H1 (cell line): ENCODE measurements at regions of chr11 and their contacts with region 1.

Region 1: GRCh38 chr11:130904380-130904779 is 11.9 kb downstream of the SNX19 start:
- DNase-seq: no peak
- H3K4me3 ChIP-seq: no peak overlapping the region
- H3K27ac ChIP-seq: no peak overlapping the region
- H3K4me1 ChIP-seq: no peaks in the 10 kb centered on the region
- H3K27me3 ChIP-seq: no peaks in the 10 kb centered on the region
- CTCF ChIP-seq: peak in 2 of 3 experiments; percentile 24 to 45; a peak in 2 of 4 replicates
- EP300 ChIP-seq: no peak
- POLR2A ChIP-seq: no peak
- RAD21 ChIP-seq: peak in 1 of 2 experiments; percentile 27; a peak in 2 of 4 replicates

Region 2: GRCh38 chr11:130787092-130787616 is 117.2 kb before region 1 on chr11:
- CTCF ChIA-PET with region 1: no interaction called
- POLR2A ChIA-PET with region 1: no interaction called
- DNase-seq: no peak
- H3K4me3 ChIP-seq: no peak overlapping the region
- H3K27ac ChIP-seq: no peak overlapping the region
- H3K4me1 ChIP-seq: peaks cover 0 to 7% (median 2%) of the 10 kb centered on the region in 4 experiments; a peak in 3 of 7 replicates
- H3K27me3 ChIP-seq: no peaks in the 10 kb centered on the region
- CTCF ChIP-seq: no peak
- EP300 ChIP-seq: no peak
- POLR2A ChIP-seq: no peak
- RAD21 ChIP-seq: no peak

Region 3: GRCh38 chr11:130916238-130916855 is 12.0 kb after region 1 on chr11 and contains the start of gene SNX19:
- CTCF ChIA-PET with region 1: interaction called, 33 read pairs
- POLR2A ChIA-PET with region 1: interaction called, 3 read pairs
- DNase-seq: peak; percentile 61 to 96
- H3K4me3 ChIP-seq: peak within 1 kb of the TSS; percentile 69 to 87 (median 76)
- H3K27ac ChIP-seq: 0 out of 2 replicates have a peak within 1 kb of the TSS, but pooled peaks have one; percentile 7
- H3K4me1 ChIP-seq: peaks cover 0 to 7% (median 3%) of the 10 kb centered on the region in 4 experiments; a peak in 5 of 7 replicates
- H3K27me3 ChIP-seq: peaks cover 0 to 15% (median 10%) of the 10 kb centered on the region in 4 experiments; a peak in 6 of 7 replicates
- CTCF ChIP-seq: peak; percentile 92 to 96 (median 94)
- EP300 ChIP-seq: peak in 1 of 2 experiments; percentile 41; a peak in 1 of 3 replicates
- POLR2A ChIP-seq: peak; percentile 55 to 90
- RAD21 ChIP-seq: peak; percentile 14 to 25; a peak in 1 of 4 replicates
- total RNA-seq, gene SNX19: 22.6 and 25.2 TPM in 2 replicates